ENCODE measurements at regions of chr22 and their contacts with region 1.

Region 1: GRCh38 chr22:41204992-41205900 is at the start of gene L3MBTL2:
- DNase-seq: peak; percentile 95 to 99 (median 98)
- ATAC-seq: peak; percentile 100
- H3K4me3 ChIP-seq: peak within 1 kb of the TSS; percentile 96
- H3K4me3 Mint-ChIP-seq: peak within 1 kb of the TSS; percentile 97
- H3K27ac ChIP-seq: peak within 1 kb of the TSS; percentile 59 to 82
- H3K27ac Mint-ChIP-seq: peak within 1 kb of the TSS; percentile 87
- H3K4me1 ChIP-seq: peaks cover 23% of the 10 kb centered on the region
- H3K4me1 Mint-ChIP-seq: peaks cover 23% of the 10 kb centered on the region
- H3K27me3 ChIP-seq: peaks cover 0 to 6% of the 10 kb centered on the region in 2 experiments
- H3K27me3 Mint-ChIP-seq: no peaks in the 10 kb centered on the region
- CTCF ChIP-seq: no peak
- total RNA-seq, gene L3MBTL2: 16.4 to 17.5 TPM

Region 2: GRCh38 chr22:41301105-41302020 is 96.1 kb after region 1 on chr22 and contains the start of gene ZC3H7B:
- CTCF ChIA-PET with region 1: no interaction called
- POLR2A ChIA-PET with region 1: no interaction called
- intact Hi-C with region 1: loop called in 1 of 2 experiments (anchors 5 kb)
- DNase-seq: peak; percentile 71 to 95 (median 79)
- ATAC-seq: peak; percentile 97
- H3K4me3 ChIP-seq: peak within 1 kb of the TSS; percentile 97
- H3K4me3 Mint-ChIP-seq: peak within 1 kb of the TSS; percentile 84
- H3K27ac ChIP-seq: peak within 1 kb of the TSS; percentile 82 to 83
- H3K27ac Mint-ChIP-seq: peak within 1 kb of the TSS; percentile 92
- H3K4me1 ChIP-seq: peaks cover 30% of the 10 kb centered on the region
- H3K4me1 Mint-ChIP-seq: peaks cover 33% of the 10 kb centered on the region
- H3K27me3 ChIP-seq: no peaks in the 10 kb centered on the region
- H3K27me3 Mint-ChIP-seq: no peaks in the 10 kb centered on the region
- CTCF ChIP-seq: peak; percentile 63
- total RNA-seq, gene ZC3H7B: 29.5 to 32.7 TPM